ENCODE measurements at regions of chr5 and their contacts with region 1.

Region 1: DNA sequence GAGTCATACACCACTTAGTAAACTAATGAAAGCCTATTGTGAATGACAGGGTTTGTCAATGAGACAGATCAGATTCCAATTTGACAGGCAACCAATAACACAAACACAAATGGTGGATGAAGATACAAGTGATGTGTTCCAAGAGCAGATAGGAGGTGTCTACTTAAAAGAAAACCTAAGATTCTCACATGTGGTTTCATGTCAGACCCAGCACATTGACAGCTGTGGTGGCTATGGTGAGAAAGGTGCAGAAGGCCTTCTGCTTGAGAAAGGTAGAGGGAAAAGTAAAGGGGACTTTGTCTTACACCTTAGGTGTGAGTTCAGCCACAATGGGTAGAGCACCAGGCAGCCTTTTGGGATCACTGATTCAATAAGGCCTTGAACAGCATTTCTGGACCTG is 11.2 kb downstream of the ANKRD31 start:
- DNase-seq: no peak
- H3K4me3 ChIP-seq: no peak overlapping the region
- H3K27ac ChIP-seq: no peak overlapping the region
- H3K4me1 ChIP-seq: no peaks in the 10 kb centered on the region
- H3K27me3 ChIP-seq: no peaks in the 10 kb centered on the region
- CTCF ChIP-seq: no peak
- EP300 ChIP-seq: no peak
- POLR2A ChIP-seq: no peak

Region 2: GRCh38 chr5:75668977-75669689 is 443.6 kb after region 1 on chr5:
- intact Hi-C with region 1: loop called in 2 of 4 experiments (anchors 10 kb)
- DNase-seq: peak in 1 of 5 donors; percentile 37
- H3K4me3 ChIP-seq: no peak overlapping the region
- H3K27ac ChIP-seq: no peak overlapping the region
- H3K4me1 ChIP-seq: no peaks in the 10 kb centered on the region
- H3K27me3 ChIP-seq: no peaks in the 10 kb centered on the region
- CTCF ChIP-seq: no peak
- EP300 ChIP-seq: no peak
- POLR2A ChIP-seq: no peak